ENCODE measurements at regions of chr16 and their contacts with region 1.

Region 1: GRCh38 chr16:51982715-51983680 is 563.9 kb downstream of the TOX3 start:
- DNase-seq: peak; percentile 35
- ATAC-seq: no peak
- H3K4me3 Mint-ChIP-seq: no peak overlapping the region
- H3K27ac Mint-ChIP-seq: no peak overlapping the region
- H3K4me1 Mint-ChIP-seq: no peaks in the 10 kb centered on the region
- H3K27me3 Mint-ChIP-seq: no peaks in the 10 kb centered on the region
- CTCF ChIP-seq: peak; percentile 70

Region 2: DNA sequence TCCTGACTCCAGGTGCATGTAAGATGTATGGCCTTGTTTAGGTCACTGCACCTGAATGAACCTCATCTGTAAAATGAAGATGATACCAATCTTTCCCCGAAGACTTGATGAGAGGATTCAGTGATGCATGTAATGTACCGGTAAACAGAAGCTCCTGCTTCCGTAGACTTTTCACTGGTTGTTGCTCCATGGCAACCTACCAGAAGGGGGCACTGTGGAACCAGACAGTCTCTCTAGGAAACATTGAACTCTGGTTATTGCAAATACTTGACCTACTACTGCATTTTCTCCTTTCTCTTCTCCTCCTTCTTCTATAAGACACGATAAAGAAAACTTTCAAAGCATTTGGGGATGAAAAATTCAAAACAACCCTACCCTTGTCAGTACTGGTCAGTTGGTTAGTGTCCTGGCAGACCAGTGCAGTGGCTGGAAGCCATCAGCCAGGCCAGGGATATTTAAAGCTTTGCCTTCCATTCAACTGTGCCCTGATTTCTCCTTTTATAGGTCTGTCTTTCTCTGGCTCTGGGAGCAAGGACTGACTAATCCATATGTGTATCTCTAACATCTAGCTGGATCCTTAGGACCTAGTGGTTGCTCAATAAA is 164.6 kb before region 1 on chr16:
- CTCF ChIA-PET with region 1: interaction called, 15 read pairs
- POLR2A ChIA-PET with region 1: no interaction called
- intact Hi-C with region 1: no loop called
- DNase-seq: peak; percentile 42
- ATAC-seq: no peak
- H3K4me3 Mint-ChIP-seq: no peak overlapping the region
- H3K27ac Mint-ChIP-seq: no peak overlapping the region
- H3K4me1 Mint-ChIP-seq: no peaks in the 10 kb centered on the region
- H3K27me3 Mint-ChIP-seq: no peaks in the 10 kb centered on the region
- CTCF ChIP-seq: peak; percentile 50